HCT116 (cell line): ENCODE measurements at regions of chr2 and their contacts with region 1.

Region 1: GRCh38 chr2:74724496-74724895 is 70.4 kb downstream of the SEMA4F start:
- DNase-seq: no peak
- ATAC-seq: no peak
- H3K4me3 ChIP-seq: no peak overlapping the region
- H3K27ac ChIP-seq: no peak overlapping the region
- H3K4me1 ChIP-seq: no peaks in the 10 kb centered on the region
- H3K27me3 ChIP-seq: no peaks in the 10 kb centered on the region
- CTCF ChIP-seq: no peak
- POLR2A ChIP-seq: no peak
- RAD21 ChIP-seq: no peak

Region 2: DNA sequence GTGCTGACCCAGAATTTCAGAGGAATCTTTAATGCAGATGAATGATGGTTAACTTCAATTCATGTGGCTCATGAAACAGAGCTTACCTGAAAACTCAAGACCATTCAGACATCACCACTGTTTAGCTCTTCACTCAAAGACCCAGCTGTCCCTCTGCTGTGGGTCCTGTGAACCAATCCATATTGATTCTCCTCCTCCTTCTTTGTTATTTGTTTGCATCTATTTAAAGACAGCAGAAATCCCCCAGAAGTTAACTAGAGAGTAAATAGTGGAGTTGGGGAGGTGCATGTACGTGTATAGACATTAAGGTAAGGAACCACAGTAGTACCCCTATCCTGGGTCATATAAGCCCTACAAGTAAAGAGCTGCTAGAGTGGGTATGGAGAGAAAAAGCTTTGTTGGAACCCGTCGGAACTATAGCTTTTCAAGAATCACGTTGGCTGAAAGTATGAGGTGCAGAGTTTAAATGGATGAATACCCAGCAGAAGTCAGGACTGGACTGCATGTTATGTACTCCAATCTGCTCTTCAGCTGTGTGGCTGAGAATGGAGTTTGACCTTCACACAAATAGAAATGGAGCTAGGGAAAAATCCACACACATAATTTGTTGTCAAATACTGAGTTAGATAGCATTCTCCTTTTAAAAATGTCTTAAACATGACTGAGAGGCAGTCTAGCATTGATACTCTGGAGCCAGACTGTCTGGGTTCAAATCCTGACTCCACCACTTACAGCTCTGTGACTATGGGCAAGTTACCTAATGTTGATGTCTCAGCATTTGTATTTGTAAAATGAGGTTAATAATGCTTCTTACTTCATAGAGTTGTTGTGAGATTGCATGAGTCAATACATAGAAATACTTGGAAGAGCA is 27.7 kb after region 1 on chr2:
- CTCF ChIA-PET with region 1: no interaction called
- POLR2A ChIA-PET with region 1: no interaction called
- RAD21 ChIA-PET with region 1: no interaction called
- intact Hi-C with region 1: loop called (anchors 1 kb)
- DNase-seq: no peak
- ATAC-seq: no peak
- H3K4me3 ChIP-seq: no peak overlapping the region
- H3K27ac ChIP-seq: no peak overlapping the region
- H3K4me1 ChIP-seq: no peaks in the 10 kb centered on the region
- H3K27me3 ChIP-seq: no peaks in the 10 kb centered on the region
- CTCF ChIP-seq: no peak
- POLR2A ChIP-seq: no peak
- RAD21 ChIP-seq: no peak